ENCODE measurements at regions of chr19 and their contacts with region 1.

Region 1: DNA sequence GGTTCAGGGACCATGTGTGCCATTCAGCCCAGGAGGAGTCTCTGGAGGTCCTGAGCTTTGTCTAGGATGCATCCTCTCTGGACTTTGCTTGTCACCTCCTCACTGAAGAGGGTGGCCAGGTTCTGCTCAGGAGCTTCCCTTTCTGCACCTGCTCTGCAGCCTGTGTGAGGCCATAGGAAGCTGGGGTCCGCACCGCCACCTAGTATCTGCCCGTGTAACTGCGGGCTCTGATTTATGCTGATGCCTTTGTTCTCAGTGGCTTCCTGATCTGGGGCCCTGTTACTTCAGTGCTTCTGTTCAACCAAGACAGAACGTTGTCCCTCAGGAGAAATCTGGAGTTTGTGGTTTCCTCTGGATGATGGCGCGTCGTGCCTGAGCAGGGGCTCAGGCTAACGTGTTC is 15.5 kb downstream of the ZNF610 start:
- DNase-seq: no peak
- H3K4me3 ChIP-seq: no peak overlapping the region
- H3K27ac ChIP-seq: no peak overlapping the region
- H3K4me1 ChIP-seq: no peaks in the 10 kb centered on the region
- H3K27me3 ChIP-seq: no peaks in the 10 kb centered on the region
- CTCF ChIP-seq: no peak

Region 2: DNA sequence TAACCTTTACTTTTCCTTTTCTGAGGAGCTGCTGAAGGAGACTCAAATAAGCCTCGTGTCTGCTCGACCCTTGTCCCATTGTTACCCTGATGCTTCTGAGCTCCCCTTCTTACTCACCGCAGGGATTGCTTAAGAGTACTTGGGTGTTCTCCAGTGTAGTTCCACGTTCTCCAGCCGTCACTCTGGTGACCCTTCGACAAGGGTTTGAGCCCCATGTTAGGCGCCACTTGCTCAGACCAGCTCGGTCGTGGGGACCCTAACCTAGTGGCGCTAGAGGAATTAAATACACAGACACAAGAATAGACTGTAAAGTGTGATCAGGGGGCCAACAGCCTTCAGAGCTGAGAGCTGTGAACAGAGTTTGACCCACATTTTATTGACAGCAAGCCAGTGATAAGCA is 44.2 kb before region 1 on chr19:
- CTCF ChIA-PET with region 1: no interaction called
- dilution Hi-C with region 1: loop called (anchors 5 kb)
- in situ Hi-C with region 1: no loop called
- intact Hi-C with region 1: no loop called
- DNase-seq: peak; percentile 17
- H3K4me3 ChIP-seq: no peak overlapping the region
- H3K27ac ChIP-seq: no peak overlapping the region
- H3K4me1 ChIP-seq: no peaks in the 10 kb centered on the region
- H3K27me3 ChIP-seq: no peaks in the 10 kb centered on the region
- CTCF ChIP-seq: no peak

Region 3: GRCh38 chr19:52444506-52444905 is 93.0 kb after region 1 on chr19:
- CTCF ChIA-PET with region 1: no interaction called
- dilution Hi-C with region 1: loop called (anchors 5 kb)
- in situ Hi-C with region 1: no loop called
- intact Hi-C with region 1: no loop called
- DNase-seq: no peak
- H3K4me3 ChIP-seq: no peak overlapping the region
- H3K27ac ChIP-seq: no peak overlapping the region
- H3K4me1 ChIP-seq: no peaks in the 10 kb centered on the region
- H3K27me3 ChIP-seq: no peaks in the 10 kb centered on the region
- CTCF ChIP-seq: no peak

Region 4: GRCh38 chr19:52473655-52474350 is 122.3 kb after region 1 on chr19:
- CTCF ChIA-PET with region 1: no interaction called
- dilution Hi-C with region 1: no loop called
- in situ Hi-C with region 1: no loop called
- intact Hi-C with region 1: no loop called
- DNase-seq: no peak
- H3K4me3 ChIP-seq: no peak overlapping the region
- H3K27ac ChIP-seq: no peak overlapping the region
- H3K4me1 ChIP-seq: no peaks in the 10 kb centered on the region
- H3K27me3 ChIP-seq: no peaks in the 10 kb centered on the region
- CTCF ChIP-seq: no peak

Region 5: DNA sequence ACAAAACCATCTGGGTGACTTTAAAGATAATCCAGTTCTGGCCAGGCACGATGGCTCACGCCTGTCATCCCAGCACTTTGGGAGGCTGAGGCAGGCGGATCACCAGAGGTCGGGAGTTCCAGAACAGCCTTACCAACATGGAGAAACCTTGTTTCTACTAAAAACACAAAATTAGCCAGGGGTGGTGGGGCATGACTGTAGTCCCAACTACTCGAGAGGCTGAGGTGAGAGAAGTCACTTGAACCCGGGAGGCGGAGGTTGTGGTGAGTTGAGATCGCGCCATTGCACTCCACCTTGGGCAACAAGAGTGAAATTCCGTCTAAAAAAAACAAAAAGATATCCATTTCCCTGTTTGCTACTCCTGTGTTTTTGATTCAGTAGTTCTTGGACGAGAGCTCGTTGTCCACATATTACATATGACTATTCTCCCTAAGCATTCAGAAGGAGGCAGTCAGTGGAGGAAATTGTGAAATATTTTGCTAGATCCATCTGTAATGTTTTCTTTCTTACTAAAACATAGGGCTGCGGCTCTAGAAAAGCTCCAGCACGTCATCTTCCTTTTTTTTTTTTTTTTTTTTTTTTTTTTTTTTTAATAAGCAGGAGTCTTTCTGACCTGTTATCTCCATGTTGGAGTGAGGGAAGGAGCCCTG is 252.2 kb after region 1 on chr19:
- CTCF ChIA-PET with region 1: no interaction called
- dilution Hi-C with region 1: no loop called
- in situ Hi-C with region 1: no loop called
- intact Hi-C with region 1: no loop called
- DNase-seq: no peak
- H3K4me3 ChIP-seq: no peak overlapping the region
- H3K27ac ChIP-seq: no peak overlapping the region
- H3K4me1 ChIP-seq: peaks cover 12% of the 10 kb centered on the region
- H3K27me3 ChIP-seq: no peaks in the 10 kb centered on the region
- CTCF ChIP-seq: no peak

Measured in mammary epithelial cell (primary cell).